ENCODE measurements at regions of chr6 and their contacts with region 1.

Region 1: DNA sequence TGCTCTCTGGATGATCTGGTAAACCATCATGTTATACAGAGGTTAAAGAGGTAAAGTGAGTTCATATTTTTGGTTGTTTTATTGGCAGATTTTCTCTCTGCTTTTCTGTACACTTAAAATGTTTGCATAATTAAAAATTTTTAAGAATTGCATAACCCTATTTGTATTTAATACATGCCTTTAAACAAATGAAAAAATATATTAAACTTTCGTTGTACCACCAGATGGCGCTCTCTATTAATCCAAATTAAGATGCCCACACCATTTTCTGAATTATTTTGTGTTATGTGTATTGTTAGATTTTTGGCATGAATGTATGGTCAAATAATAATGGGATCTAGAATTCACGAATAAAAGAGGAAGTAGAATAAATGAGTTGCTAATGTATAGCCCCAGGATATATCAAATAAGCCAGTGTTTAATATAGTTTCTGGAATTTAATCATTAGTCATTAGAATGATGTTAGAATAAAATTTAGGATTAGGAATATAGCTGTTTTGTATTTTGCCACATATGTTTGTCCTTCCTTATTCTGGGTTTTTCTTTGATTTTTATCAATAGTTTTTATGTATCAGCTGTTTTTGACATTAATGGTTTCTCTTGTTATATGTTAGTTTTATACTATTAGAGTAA is 38.9 kb downstream of the SMAP1 start:
- DNase-seq: no peak
- H3K4me3 Mint-ChIP-seq: no peak overlapping the region
- H3K27ac Mint-ChIP-seq: no peak overlapping the region
- H3K4me1 Mint-ChIP-seq: peaks cover 41% of the 10 kb centered on the region
- H3K27me3 Mint-ChIP-seq: no peaks in the 10 kb centered on the region

Region 2: DNA sequence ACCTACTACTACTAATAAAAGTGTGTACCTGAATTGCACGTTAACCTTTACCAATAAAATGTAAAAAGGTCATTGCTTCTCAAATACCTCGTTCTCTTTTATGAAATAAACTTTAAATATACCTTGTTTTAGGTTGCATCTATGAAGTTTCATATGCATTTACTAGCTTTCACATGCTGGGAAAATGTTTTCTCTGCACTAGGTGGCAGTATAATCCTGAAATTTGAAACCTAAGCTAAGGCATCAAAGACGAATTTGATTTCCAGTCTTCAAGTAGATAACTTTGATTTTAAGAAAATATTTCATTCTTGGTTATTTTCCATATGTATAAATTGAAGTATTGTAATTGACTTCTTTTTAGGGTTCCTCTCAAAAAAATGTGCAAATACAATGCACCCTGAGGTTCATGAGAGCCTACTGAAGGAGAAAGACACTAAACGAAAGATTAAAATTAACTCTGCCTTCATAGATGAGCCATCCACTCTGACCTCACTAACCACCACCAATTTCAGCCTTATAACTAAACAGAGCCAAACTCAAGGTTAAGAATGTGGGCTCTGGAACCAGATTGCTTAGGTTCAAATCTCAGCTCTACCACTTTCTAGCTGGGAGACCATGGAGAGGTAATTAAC is 396.4 kb before region 1 on chr6:
- CTCF ChIA-PET with region 1: interaction called, 4 read pairs
- intact Hi-C with region 1: loop called (anchors 5 kb)
- DNase-seq: no peak
- H3K4me3 Mint-ChIP-seq: no peak overlapping the region
- H3K27ac Mint-ChIP-seq: no peak overlapping the region
- H3K4me1 Mint-ChIP-seq: peaks cover 4% of the 10 kb centered on the region
- H3K27me3 Mint-ChIP-seq: peaks cover 19% of the 10 kb centered on the region

Region 3: GRCh38 chr6:70616728-70617260 is 89.8 kb before region 1 on chr6:
- CTCF ChIA-PET with region 1: no interaction called
- intact Hi-C with region 1: no loop called
- DNase-seq: no peak
- H3K4me3 Mint-ChIP-seq: no peak overlapping the region
- H3K27ac Mint-ChIP-seq: no peak overlapping the region
- H3K4me1 Mint-ChIP-seq: no peaks in the 10 kb centered on the region
- H3K27me3 Mint-ChIP-seq: peaks cover 3% of the 10 kb centered on the region

Region 4: GRCh38 chr6:70738028-70738427 is 31.4 kb after region 1 on chr6:
- CTCF ChIA-PET with region 1: interaction called, 3 read pairs
- intact Hi-C with region 1: loop called (anchors 2 kb)
- DNase-seq: no peak
- H3K4me3 Mint-ChIP-seq: no peak overlapping the region
- H3K27ac Mint-ChIP-seq: peak overlapping the region; percentile 38
- H3K4me1 Mint-ChIP-seq: peaks cover 40% of the 10 kb centered on the region
- H3K27me3 Mint-ChIP-seq: no peaks in the 10 kb centered on the region

Region 5: DNA sequence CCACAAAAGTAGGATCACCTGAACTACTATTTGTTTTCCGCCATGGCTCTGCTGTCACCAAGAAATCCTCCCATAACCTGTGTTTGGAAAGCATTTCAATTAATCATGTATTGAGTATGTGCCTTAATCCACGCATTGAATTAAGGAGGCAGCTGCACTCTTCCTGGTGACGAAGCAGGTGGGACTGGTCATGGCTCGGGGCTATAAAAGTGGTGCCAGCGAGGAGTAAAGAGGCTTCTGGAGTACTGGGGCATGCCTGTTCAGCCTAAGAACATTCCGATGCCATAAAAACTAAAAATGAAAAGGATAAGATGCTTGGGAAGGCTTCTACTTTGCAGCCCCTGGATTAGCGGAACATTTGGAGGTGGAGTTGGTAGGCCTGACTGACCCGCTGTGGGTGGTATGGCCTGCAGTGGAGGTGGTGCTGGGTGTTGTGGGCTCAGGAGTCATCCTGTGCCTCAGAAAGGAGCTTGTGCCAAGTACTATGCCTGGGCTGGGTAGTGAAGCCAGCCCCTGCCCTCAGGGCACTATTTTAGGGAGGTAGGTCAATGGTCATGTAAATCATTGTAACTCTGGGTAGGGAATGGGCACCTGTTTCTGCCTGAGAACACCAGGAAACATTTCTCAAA is 139.7 kb after region 1 on chr6:
- CTCF ChIA-PET with region 1: interaction called, 12 read pairs
- intact Hi-C with region 1: loop called (anchors 1 kb)
- DNase-seq: no peak
- H3K4me3 Mint-ChIP-seq: no peak overlapping the region
- H3K27ac Mint-ChIP-seq: no peak overlapping the region
- H3K4me1 Mint-ChIP-seq: peaks cover 3% of the 10 kb centered on the region
- H3K27me3 Mint-ChIP-seq: no peaks in the 10 kb centered on the region

Region 6: DNA sequence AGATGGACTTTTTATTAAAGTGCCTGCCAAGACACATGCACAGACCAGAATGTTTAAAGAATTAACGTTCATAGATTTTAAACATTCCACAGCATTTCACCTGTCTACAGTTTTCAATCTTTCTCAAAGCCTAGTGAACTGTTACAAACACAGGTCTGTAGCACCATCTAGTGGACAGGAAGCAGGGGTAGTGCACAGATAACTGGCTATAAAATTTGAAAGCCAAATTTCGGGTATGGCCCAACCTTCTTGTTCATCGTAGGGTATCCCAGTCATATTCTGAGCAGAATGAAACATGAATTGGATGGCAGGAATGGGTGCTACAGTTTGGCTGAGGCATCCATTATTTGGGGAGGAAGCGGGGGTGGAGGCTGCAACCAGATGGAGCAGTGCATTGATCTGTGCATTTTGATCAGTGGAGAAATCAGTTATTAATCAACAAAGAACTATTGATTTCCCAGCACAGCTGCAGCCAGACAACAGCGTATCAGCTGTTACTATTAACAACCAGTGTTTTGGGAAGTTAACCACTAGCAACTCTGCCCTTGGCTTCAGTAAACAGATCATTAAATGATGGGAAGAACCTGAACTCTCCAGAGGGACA is 306.4 kb after region 1 on chr6:
- CTCF ChIA-PET with region 1: interaction called, 5 read pairs
- intact Hi-C with region 1: loop called (anchors 1 kb)
- DNase-seq: peak; percentile 17
- H3K4me3 Mint-ChIP-seq: no peak overlapping the region
- H3K27ac Mint-ChIP-seq: no peak overlapping the region
- H3K4me1 Mint-ChIP-seq: no peaks in the 10 kb centered on the region
- H3K27me3 Mint-ChIP-seq: peaks cover 11% of the 10 kb centered on the region

Region 7: DNA sequence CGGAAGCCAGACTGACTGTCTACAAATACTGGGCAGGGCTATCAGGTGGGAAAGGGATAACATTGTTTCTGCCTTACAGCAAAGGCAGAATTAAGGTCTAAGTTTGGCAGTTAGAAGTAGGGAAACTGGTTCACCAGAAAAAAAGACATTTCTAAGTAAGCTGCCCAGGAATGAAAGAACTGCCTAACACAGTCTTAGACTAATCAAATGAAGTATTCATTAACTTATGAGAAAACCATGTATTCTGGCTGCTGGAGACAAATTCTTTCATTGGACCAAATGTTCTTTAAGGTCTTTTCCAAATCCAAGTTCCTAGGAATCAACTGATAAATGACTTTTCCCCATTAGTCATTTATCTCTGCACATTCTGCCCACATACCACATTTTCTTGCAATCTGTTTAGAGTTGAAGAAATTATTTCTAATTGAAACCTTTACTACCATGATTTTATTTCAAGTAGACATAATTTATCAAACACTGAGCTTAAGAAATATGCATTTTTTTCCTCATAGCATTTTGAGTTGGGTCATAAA is 461.7 kb after region 1 on chr6:
- CTCF ChIA-PET with region 1: no interaction called
- intact Hi-C with region 1: no loop called
- DNase-seq: no peak
- H3K4me3 Mint-ChIP-seq: no peak overlapping the region
- H3K27ac Mint-ChIP-seq: no peak overlapping the region
- H3K4me1 Mint-ChIP-seq: no peaks in the 10 kb centered on the region
- H3K27me3 Mint-ChIP-seq: peaks cover 5% of the 10 kb centered on the region